B cell (primary cell): ENCODE measurements at regions of chr16 and their contacts with region 1.

Region 1: DNA sequence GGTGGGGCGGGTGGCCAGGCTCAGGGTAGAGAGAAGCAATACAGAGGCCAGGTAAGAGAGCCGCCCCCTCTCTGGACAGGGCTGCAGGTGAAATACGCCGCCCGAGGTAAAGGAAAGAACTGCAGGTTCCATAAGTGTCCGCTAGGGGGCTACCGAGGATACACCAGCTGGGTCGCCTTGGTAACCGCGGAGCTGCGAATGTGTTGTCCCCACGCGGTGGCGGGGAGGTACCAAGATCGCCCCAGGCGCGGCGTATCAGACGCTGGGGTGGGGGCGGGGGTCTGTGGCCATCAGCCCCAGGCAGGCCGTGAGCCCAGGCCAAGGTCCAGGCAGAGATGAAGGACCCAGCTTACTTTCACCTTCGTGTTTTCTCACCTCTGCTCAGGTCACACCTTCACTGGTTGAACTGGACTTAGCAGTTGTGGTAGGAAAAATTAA is 18.4 kb upstream of the ZFP90 start:
- DNase-seq: peak; percentile 92
- ATAC-seq: peak; percentile 99
- H3K4me3 ChIP-seq: peak overlapping the region in 4 of 5 experiments; percentile 12 to 66 (median 33)
- H3K4me3 Mint-ChIP-seq: peak overlapping the region; percentile 77
- H3K27ac ChIP-seq: no peak overlapping the region
- H3K27ac Mint-ChIP-seq: peak overlapping the region; percentile 65
- H3K4me1 ChIP-seq: peaks cover 4 to 10% of the 10 kb centered on the region in 2 donors
- H3K4me1 Mint-ChIP-seq: peaks cover 11% of the 10 kb centered on the region
- H3K27me3 ChIP-seq: peaks cover 0 to 3% (median 0%) of the 10 kb centered on the region in 4 experiments
- H3K27me3 Mint-ChIP-seq: no peaks in the 10 kb centered on the region
- CTCF ChIP-seq: peak; percentile 99

Region 2: GRCh38 chr16:68401871-68402747 is 118.6 kb before region 1 on chr16:
- CTCF ChIA-PET with region 1: interaction called, 12 read pairs
- POLR2A ChIA-PET with region 1: no interaction called
- intact Hi-C with region 1: no loop called
- DNase-seq: no peak
- ATAC-seq: no peak
- H3K4me3 ChIP-seq: no peak overlapping the region
- H3K4me3 Mint-ChIP-seq: no peak overlapping the region
- H3K27ac ChIP-seq: no peak overlapping the region
- H3K27ac Mint-ChIP-seq: peak overlapping the region; percentile 16
- H3K4me1 ChIP-seq: no peaks in the 10 kb centered on the region
- H3K4me1 Mint-ChIP-seq: no peaks in the 10 kb centered on the region
- H3K27me3 ChIP-seq: peaks cover 0 to 3% (median 0%) of the 10 kb centered on the region in 4 experiments
- H3K27me3 Mint-ChIP-seq: peaks cover 4% of the 10 kb centered on the region
- CTCF ChIP-seq: no peak

Region 3: GRCh38 chr16:68538880-68539701 is 18.4 kb after region 1 on chr16 and contains the start of gene ZFP90:
- CTCF ChIA-PET with region 1: interaction called, 17 read pairs
- POLR2A ChIA-PET with region 1: no interaction called
- intact Hi-C with region 1: no loop called
- DNase-seq: peak; percentile 91
- ATAC-seq: peak; percentile 96
- H3K4me3 ChIP-seq: peak within 1 kb of the TSS; percentile 67 to 97 (median 90)
- H3K4me3 Mint-ChIP-seq: peak within 1 kb of the TSS; percentile 95
- H3K27ac ChIP-seq: peak within 1 kb of the TSS; percentile 80 to 82
- H3K27ac Mint-ChIP-seq: peak within 1 kb of the TSS; percentile 97
- H3K4me1 ChIP-seq: peaks cover 8 to 16% of the 10 kb centered on the region in 2 donors
- H3K4me1 Mint-ChIP-seq: peaks cover 15% of the 10 kb centered on the region
- H3K27me3 ChIP-seq: no peaks in the 10 kb centered on the region
- H3K27me3 Mint-ChIP-seq: no peaks in the 10 kb centered on the region
- CTCF ChIP-seq: no peak
- total RNA-seq, gene ZFP90: 30.7 and 36.0 TPM in 2 replicates

Region 4: GRCh38 chr16:68704232-68704867 is 183.7 kb after region 1 on chr16:
- CTCF ChIA-PET with region 1: no interaction called
- POLR2A ChIA-PET with region 1: no interaction called
- intact Hi-C with region 1: no loop called
- DNase-seq: peak; percentile 55
- ATAC-seq: peak; percentile 60
- H3K4me3 ChIP-seq: no peak overlapping the region
- H3K4me3 Mint-ChIP-seq: no peak overlapping the region
- H3K27ac ChIP-seq: no peak overlapping the region
- H3K27ac Mint-ChIP-seq: peak overlapping the region; percentile 6
- H3K4me1 ChIP-seq: no peaks in the 10 kb centered on the region
- H3K4me1 Mint-ChIP-seq: peaks cover 3% of the 10 kb centered on the region
- H3K27me3 ChIP-seq: no peaks in the 10 kb centered on the region
- H3K27me3 Mint-ChIP-seq: peaks cover 12% of the 10 kb centered on the region
- CTCF ChIP-seq: peak; percentile 64

Region 5: GRCh38 chr16:68719993-68720489 is 199.4 kb after region 1 on chr16:
- CTCF ChIA-PET with region 1: no interaction called
- POLR2A ChIA-PET with region 1: no interaction called
- intact Hi-C with region 1: no loop called
- DNase-seq: no peak
- ATAC-seq: peak; percentile 83
- H3K4me3 ChIP-seq: no peak overlapping the region
- H3K4me3 Mint-ChIP-seq: no peak overlapping the region
- H3K27ac ChIP-seq: no peak overlapping the region
- H3K27ac Mint-ChIP-seq: peak overlapping the region; percentile 68
- H3K4me1 ChIP-seq: peaks cover 0 to 2% of the 10 kb centered on the region in 2 donors
- H3K4me1 Mint-ChIP-seq: peaks cover 10% of the 10 kb centered on the region
- H3K27me3 ChIP-seq: no peaks in the 10 kb centered on the region
- H3K27me3 Mint-ChIP-seq: no peaks in the 10 kb centered on the region
- CTCF ChIP-seq: no peak

Region 6: DNA sequence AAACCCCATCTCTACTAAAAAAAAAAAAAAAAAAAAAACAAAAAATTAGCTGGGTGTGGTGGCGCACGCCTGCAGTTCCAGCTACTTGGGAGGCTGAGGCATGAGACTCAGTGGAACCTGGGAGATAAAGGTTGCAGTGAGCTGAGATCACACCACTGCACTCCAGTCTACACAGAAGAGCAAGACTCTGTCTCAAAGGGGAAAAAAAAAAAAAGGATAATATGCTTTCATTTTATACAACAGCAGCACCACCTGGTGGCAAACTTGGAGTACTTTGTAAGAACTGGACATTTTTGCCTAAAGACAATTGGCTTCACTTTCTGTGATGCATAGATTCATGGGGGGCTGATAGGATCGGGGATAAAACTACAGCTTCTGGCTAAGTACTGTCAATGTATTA is 603.2 kb after region 1 on chr16:
- CTCF ChIA-PET with region 1: interaction called, 18 read pairs
- POLR2A ChIA-PET with region 1: no interaction called
- intact Hi-C with region 1: no loop called
- DNase-seq: peak; percentile 77
- ATAC-seq: peak; percentile 70
- H3K4me3 ChIP-seq: no peak overlapping the region
- H3K4me3 Mint-ChIP-seq: no peak overlapping the region
- H3K27ac ChIP-seq: no peak overlapping the region
- H3K27ac Mint-ChIP-seq: no peak overlapping the region
- H3K4me1 ChIP-seq: no peaks in the 10 kb centered on the region
- H3K4me1 Mint-ChIP-seq: peaks cover 14% of the 10 kb centered on the region
- H3K27me3 ChIP-seq: no peaks in the 10 kb centered on the region
- H3K27me3 Mint-ChIP-seq: no peaks in the 10 kb centered on the region
- CTCF ChIP-seq: peak; percentile 81